ENCODE measurements at regions of chr12 and their contacts with region 1.

Region 1: GRCh38 chr12:118035246-118036041 is 18.9 kb downstream of the RFC5 start:
- DNase-seq: no peak
- ATAC-seq: peak; percentile 73
- H3K4me3 ChIP-seq: no peak overlapping the region
- H3K27ac ChIP-seq: peak overlapping the region; percentile 23
- H3K4me1 ChIP-seq: peaks cover 0 to 21% of the 10 kb centered on the region in 2 experiments; a peak in 3 of 4 replicates
- H3K27me3 ChIP-seq: no peaks in the 10 kb centered on the region
- CTCF ChIP-seq: no peak; a peak in 1 of 6 replicates
- POLR2A ChIP-seq: no peak
- RAD21 ChIP-seq: no peak

Region 2: GRCh38 chr12:117857632-117858612 is 177.5 kb before region 1 on chr12:
- CTCF ChIA-PET with region 1: interaction called, 14 read pairs
- POLR2A ChIA-PET with region 1: no interaction called
- RAD21 ChIA-PET with region 1: no interaction called
- intact Hi-C with region 1: no loop called
- DNase-seq: no peak
- ATAC-seq: peak; percentile 72
- H3K4me3 ChIP-seq: no peak overlapping the region
- H3K27ac ChIP-seq: no peak overlapping the region
- H3K4me1 ChIP-seq: peaks cover 9 to 34% of the 10 kb centered on the region in 2 experiments
- H3K27me3 ChIP-seq: no peaks in the 10 kb centered on the region
- CTCF ChIP-seq: peak; percentile 48 to 78 (median 74); a peak in 5 of 6 replicates
- POLR2A ChIP-seq: no peak
- RAD21 ChIP-seq: peak; percentile 21

Region 3: GRCh38 chr12:117874842-117875434 is 160.5 kb before region 1 on chr12:
- CTCF ChIA-PET with region 1: interaction called, 62 read pairs
- POLR2A ChIA-PET with region 1: interaction called, 4 read pairs
- RAD21 ChIA-PET with region 1: interaction called, 13 to 15 read pairs
- intact Hi-C with region 1: loop called (anchors 1 kb)
- DNase-seq: peak; percentile 57
- ATAC-seq: peak; percentile 84
- H3K4me3 ChIP-seq: no peak overlapping the region
- H3K27ac ChIP-seq: no peak overlapping the region
- H3K4me1 ChIP-seq: peaks cover 7 to 25% of the 10 kb centered on the region in 2 experiments; a peak in 3 of 4 replicates
- H3K27me3 ChIP-seq: no peaks in the 10 kb centered on the region
- CTCF ChIP-seq: peak; percentile 84 to 92 (median 84)
- POLR2A ChIP-seq: no peak
- RAD21 ChIP-seq: peak; percentile 98

Region 4: GRCh38 chr12:118046430-118046829 is 11.0 kb after region 1 on chr12:
- CTCF ChIA-PET with region 1: interaction called, 12 read pairs
- POLR2A ChIA-PET with region 1: no interaction called
- RAD21 ChIA-PET with region 1: interaction called in 1 of 2 experiments, 3 read pairs
- intact Hi-C with region 1: no loop called
- DNase-seq: no peak
- ATAC-seq: no peak
- H3K4me3 ChIP-seq: no peak overlapping the region
- H3K27ac ChIP-seq: no peak overlapping the region
- H3K4me1 ChIP-seq: peaks cover 6 to 10% of the 10 kb centered on the region in 2 experiments
- H3K27me3 ChIP-seq: no peaks in the 10 kb centered on the region
- CTCF ChIP-seq: no peak
- POLR2A ChIP-seq: no peak
- RAD21 ChIP-seq: no peak

Region 5: DNA sequence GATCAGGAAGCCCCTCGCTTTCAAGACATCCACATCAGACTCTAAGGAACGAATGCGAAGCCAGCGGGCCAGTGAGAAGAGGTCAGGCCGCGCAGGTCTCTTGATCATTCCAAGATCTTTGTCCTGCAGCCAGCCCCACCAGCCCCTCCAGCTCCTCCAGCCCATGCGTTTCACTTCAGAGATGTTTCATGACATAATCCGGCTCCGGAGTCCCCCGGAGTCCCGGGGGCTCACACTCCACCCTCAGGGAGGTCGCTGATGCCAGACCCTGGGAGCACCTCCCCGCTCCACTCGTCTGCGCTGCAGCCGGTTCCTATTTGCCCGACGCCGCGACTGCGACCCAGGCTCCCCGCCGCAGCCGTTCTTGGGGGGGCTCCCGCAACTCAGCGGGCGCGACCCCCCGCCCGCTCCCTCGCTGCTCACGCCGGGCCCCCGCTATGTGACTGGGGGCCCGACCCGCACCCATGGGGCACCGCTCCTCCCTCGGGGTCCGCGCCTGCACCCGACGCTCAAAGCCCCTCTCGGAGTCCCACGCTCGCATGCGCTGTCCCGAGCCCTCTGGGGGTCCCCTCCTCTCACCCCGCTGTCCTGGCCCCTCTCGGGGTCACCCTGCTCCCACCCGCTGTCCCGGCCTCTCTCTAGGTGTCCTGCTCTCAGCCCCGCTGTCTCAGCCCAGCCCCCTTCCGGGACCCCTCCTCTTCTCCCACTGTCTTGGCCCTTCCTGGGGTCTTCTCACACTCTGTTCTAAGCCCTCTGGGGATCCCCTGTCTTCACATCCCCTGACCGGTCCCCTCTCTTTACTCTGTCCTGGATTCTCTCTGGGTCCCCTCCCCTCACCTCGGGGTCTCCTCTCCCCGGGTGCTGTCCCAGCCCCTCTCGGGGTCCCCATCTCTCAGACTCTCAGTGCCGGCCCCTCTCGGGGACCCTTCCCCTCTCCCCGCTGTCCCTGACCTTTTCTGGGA is 336.2 kb after region 1 on chr12:
- CTCF ChIA-PET with region 1: no interaction called
- POLR2A ChIA-PET with region 1: no interaction called
- RAD21 ChIA-PET with region 1: no interaction called
- intact Hi-C with region 1: no loop called
- DNase-seq: no peak
- ATAC-seq: no peak
- H3K4me3 ChIP-seq: peak overlapping the region; percentile 83 to 89
- H3K27ac ChIP-seq: no peak overlapping the region
- H3K4me1 ChIP-seq: peaks cover 0 to 26% of the 10 kb centered on the region in 2 experiments; a peak in 3 of 4 replicates
- H3K27me3 ChIP-seq: no peaks in the 10 kb centered on the region
- CTCF ChIP-seq: no peak
- POLR2A ChIP-seq: no peak
- RAD21 ChIP-seq: no peak